ENCODE measurements at regions of chr19 and their contacts with region 1.

Region 1: DNA sequence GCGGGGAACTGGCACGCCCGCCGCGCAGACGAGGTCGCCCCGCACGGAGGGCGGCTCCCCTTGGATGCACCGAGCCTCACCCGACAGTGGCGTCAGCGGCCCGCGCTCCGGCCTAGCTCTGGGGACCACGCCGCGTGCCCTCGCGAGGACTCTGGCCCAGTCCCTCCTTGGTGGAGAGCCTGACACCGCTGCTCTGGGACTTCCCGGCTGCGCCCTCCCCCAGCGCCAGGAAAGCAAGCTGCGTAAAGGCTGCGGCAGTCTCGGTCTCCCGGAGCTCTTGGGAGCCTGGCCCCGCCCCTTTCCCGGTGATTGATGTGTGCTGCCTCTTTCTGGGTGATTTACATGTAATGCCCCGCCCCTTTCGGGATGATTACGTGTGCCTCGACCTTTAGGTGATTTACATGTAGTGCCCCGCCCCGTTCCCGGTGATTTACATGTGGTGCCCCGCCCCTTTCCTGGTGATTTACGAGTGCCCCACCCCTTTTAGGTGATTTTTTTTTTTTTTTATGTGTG is at the start of gene LENG9:
- DNase-seq: peak; percentile 98
- ATAC-seq: peak; percentile 74
- H3K4me3 ChIP-seq: peak within 1 kb of the TSS; percentile 72 to 80 (median 77)
- H3K27ac ChIP-seq: peak within 1 kb of the TSS; percentile 96
- H3K4me1 ChIP-seq: peaks cover 21% of the 10 kb centered on the region
- H3K27me3 ChIP-seq: no peaks in the 10 kb centered on the region
- CTCF ChIP-seq: no peak
- EP300 ChIP-seq: no peak
- POLR2A ChIP-seq: peak; percentile 85 to 95
- RAD21 ChIP-seq: 0 out of 2 replicates have a peak, but pooled peaks have one; percentile 9
- total RNA-seq, gene LENG9: 1.5 and 2.9 TPM in 2 replicates

Region 2: DNA sequence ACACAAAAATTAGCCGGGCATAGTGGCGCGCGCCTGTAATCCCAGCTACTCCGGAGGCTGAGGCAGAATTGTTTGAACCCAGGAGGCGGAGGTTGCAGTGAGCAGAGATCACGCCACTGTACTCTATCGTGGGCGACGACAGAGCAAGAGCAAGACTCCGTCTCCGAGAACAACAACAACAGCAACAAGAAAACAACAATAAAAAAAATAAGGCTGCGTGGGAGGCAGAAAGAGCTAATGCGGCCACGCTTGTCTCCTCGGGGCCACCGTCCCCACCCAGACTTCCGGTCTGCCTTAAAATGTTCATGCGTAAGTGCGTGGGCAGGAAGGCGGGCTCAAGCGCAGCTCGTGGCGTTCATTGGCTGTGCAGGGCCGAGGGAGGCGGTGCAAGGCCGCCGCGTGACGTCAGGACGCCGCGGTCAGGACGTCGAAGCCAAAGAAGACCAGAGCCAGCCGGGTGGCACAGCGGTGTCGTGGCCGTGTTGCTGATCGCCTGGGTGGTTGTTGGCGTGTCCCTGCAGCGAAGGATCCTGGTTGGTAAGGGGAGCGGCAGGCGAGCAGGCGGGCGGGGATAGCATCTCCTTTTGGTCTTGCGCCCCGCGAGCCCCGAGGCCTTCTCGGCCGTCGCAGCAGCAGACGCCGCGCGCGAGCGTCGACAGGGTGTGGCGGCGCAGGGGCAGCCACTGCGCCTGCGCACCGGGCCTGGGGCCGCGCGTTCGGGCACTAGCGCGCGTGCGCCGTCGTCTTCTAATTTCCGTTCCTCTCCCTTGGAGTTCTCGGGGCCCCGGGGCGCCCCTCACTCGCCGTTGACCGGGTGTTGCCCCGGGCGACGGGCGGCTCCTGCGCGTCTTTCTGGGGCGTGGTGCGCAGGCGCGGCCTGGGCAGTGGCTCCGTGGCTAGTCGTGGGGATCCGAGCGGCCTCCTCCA is 14.6 kb before region 1 on chr19 and contains the start of gene LENG8:
- CTCF ChIA-PET with region 1: no interaction called
- POLR2A ChIA-PET with region 1: interaction called, 67 read pairs
- in situ Hi-C with region 1: no loop called
- intact Hi-C with region 1: loop called (anchors 2 kb)
- DNase-seq: peak; percentile 91
- ATAC-seq: peak; percentile 93
- H3K4me3 ChIP-seq: peak within 1 kb of the TSS; percentile 81 to 93 (median 91)
- H3K27ac ChIP-seq: peak within 1 kb of the TSS; percentile 79
- H3K4me1 ChIP-seq: peaks cover 46% of the 10 kb centered on the region
- H3K27me3 ChIP-seq: no peaks in the 10 kb centered on the region; a peak in 2 of 5 replicates
- CTCF ChIP-seq: peak; percentile 17; the same call in 1 of the 2 replicates
- EP300 ChIP-seq: no peak
- POLR2A ChIP-seq: peak; percentile 94 to 99
- RAD21 ChIP-seq: 0 out of 2 replicates have a peak, but pooled peaks have one; percentile 37
- total RNA-seq, gene LENG8: 5.8 and 14.3 TPM in 2 replicates